CD4-positive, alpha-beta T cell (primary cell): ENCODE measurements at regions of chr12 and their contacts with region 1.

Region 1: GRCh38 chr12:104137913-104138796 is at the start of gene NFYB:
- DNase-seq: peak; percentile 85 to 98 (median 90)
- ATAC-seq: peak; percentile 96
- H3K4me3 ChIP-seq: peak within 1 kb of the TSS; percentile 63
- H3K4me3 Mint-ChIP-seq: peak within 1 kb of the TSS; percentile 93
- H3K27ac ChIP-seq: peak within 1 kb of the TSS in 1 of 2 donors; percentile 43
- H3K27ac Mint-ChIP-seq: peak within 1 kb of the TSS; percentile 80
- H3K4me1 ChIP-seq: peaks cover 18% of the 10 kb centered on the region
- H3K4me1 Mint-ChIP-seq: no peaks in the 10 kb centered on the region
- H3K27me3 ChIP-seq: no peaks in the 10 kb centered on the region
- H3K27me3 Mint-ChIP-seq: no peaks in the 10 kb centered on the region
- CTCF ChIP-seq: no peak
- total RNA-seq, gene NFYB: 12.8 to 14.6 TPM

Region 2: GRCh38 chr12:104064031-104064822 is 73.9 kb before region 1 on chr12 and contains the start of gene HCFC2:
- CTCF ChIA-PET with region 1: no interaction called
- POLR2A ChIA-PET with region 1: interaction called, 31 read pairs
- intact Hi-C with region 1: loop called in 1 of 2 experiments (anchors 2 kb)
- DNase-seq: peak; percentile 74 to 93 (median 85)
- ATAC-seq: peak; percentile 92
- H3K4me3 ChIP-seq: peak within 1 kb of the TSS; percentile 85
- H3K4me3 Mint-ChIP-seq: peak within 1 kb of the TSS; percentile 95
- H3K27ac ChIP-seq: peak within 1 kb of the TSS; percentile 42 to 59
- H3K27ac Mint-ChIP-seq: peak within 1 kb of the TSS; percentile 82
- H3K4me1 ChIP-seq: peaks cover 17% of the 10 kb centered on the region
- H3K4me1 Mint-ChIP-seq: peaks cover 33% of the 10 kb centered on the region
- H3K27me3 ChIP-seq: peaks cover 0 to 2% of the 10 kb centered on the region in 2 experiments
- H3K27me3 Mint-ChIP-seq: peaks cover 10% of the 10 kb centered on the region
- CTCF ChIP-seq: no peak
- total RNA-seq, gene HCFC2: 11.2 to 15.1 TPM

Region 3: GRCh38 chr12:104215638-104216297 is 77.6 kb after region 1 on chr12 and contains the start of gene TXNRD1:
- CTCF ChIA-PET with region 1: no interaction called
- POLR2A ChIA-PET with region 1: interaction called, 5 read pairs
- intact Hi-C with region 1: loop called in 1 of 2 experiments (anchors 5 kb)
- DNase-seq: peak; percentile 68 to 93 (median 82)
- ATAC-seq: peak; percentile 87
- H3K4me3 ChIP-seq: peak within 1 kb of the TSS; percentile 67
- H3K4me3 Mint-ChIP-seq: peak within 1 kb of the TSS; percentile 88
- H3K27ac ChIP-seq: no peak within 1 kb of the TSS
- H3K27ac Mint-ChIP-seq: peak within 1 kb of the TSS; percentile 20
- H3K4me1 ChIP-seq: peaks cover 18% of the 10 kb centered on the region
- H3K4me1 Mint-ChIP-seq: peaks cover 30% of the 10 kb centered on the region
- H3K27me3 ChIP-seq: no peaks in the 10 kb centered on the region
- H3K27me3 Mint-ChIP-seq: no peaks in the 10 kb centered on the region
- CTCF ChIP-seq: peak; percentile 91
- total RNA-seq, gene TXNRD1: 24.6 to 27.2 TPM

Region 4: DNA sequence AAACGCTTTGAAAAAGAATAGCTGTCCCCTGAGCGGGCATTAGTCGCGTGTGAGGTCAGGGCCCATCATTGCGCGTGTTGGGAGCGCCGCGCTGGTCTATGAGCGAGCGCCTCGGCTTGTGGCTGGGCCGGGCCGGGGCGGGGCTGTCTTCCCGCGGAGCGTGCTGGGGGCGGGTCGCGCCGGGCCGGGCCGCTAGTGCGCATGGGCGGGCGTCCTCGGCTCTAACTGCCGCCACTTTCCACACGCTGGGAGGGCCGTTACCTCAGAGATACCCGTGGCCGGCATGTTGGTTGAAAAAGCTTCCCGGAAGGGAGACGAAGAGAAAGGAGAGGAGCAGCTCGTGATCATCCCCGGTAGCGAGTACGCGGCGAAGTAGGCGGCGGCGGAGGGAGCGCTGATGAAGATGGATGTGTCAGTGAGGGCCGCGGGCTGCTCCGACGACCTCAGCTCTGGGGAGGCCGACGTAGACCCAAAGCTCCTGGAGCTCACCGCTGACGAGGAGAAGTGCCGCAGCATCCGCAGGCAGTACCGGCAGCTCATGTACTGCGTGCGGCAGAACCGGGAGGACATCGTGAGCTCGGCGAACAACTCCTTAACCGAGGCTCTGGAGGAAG is 165.5 kb after region 1 on chr12 and contains the start of gene EID3:
- CTCF ChIA-PET with region 1: no interaction called
- POLR2A ChIA-PET with region 1: interaction called, 13 read pairs
- intact Hi-C with region 1: loop called (anchors 5 kb)
- DNase-seq: peak; percentile 81 to 94 (median 90)
- ATAC-seq: peak; percentile 93
- H3K4me3 ChIP-seq: peak within 1 kb of the TSS; percentile 73
- H3K4me3 Mint-ChIP-seq: peak within 1 kb of the TSS; percentile 92
- H3K27ac ChIP-seq: peak within 1 kb of the TSS; percentile 75 to 84
- H3K27ac Mint-ChIP-seq: peak within 1 kb of the TSS; percentile 99
- H3K4me1 ChIP-seq: peaks cover 23% of the 10 kb centered on the region
- H3K4me1 Mint-ChIP-seq: peaks cover 68% of the 10 kb centered on the region
- H3K27me3 ChIP-seq: no peaks in the 10 kb centered on the region
- H3K27me3 Mint-ChIP-seq: no peaks in the 10 kb centered on the region
- CTCF ChIP-seq: no peak
- total RNA-seq, gene EID3: 13.5 to 14.3 TPM

Region 5: GRCh38 chr12:105107494-105108371 is 969.6 kb after region 1 on chr12 and contains the start of gene WASHC4:
- CTCF ChIA-PET with region 1: no interaction called
- POLR2A ChIA-PET with region 1: interaction called, 17 read pairs
- intact Hi-C with region 1: loop called in 1 of 2 experiments (anchors 5 kb)
- DNase-seq: peak; percentile 87 to 96 (median 90)
- ATAC-seq: peak; percentile 95
- H3K4me3 ChIP-seq: peak within 1 kb of the TSS; percentile 93
- H3K4me3 Mint-ChIP-seq: peak within 1 kb of the TSS; percentile 98
- H3K27ac ChIP-seq: peak within 1 kb of the TSS; percentile 95 to 96
- H3K27ac Mint-ChIP-seq: peak within 1 kb of the TSS; percentile 89
- H3K4me1 ChIP-seq: peaks cover 13% of the 10 kb centered on the region
- H3K4me1 Mint-ChIP-seq: peaks cover 49% of the 10 kb centered on the region
- H3K27me3 ChIP-seq: peaks cover 4 to 9% of the 10 kb centered on the region in 2 experiments
- H3K27me3 Mint-ChIP-seq: peaks cover 30% of the 10 kb centered on the region
- CTCF ChIP-seq: no peak
- total RNA-seq, gene WASHC4: 32.5 to 33.6 TPM